T-cell (primary cell): ENCODE measurements at regions of chr2 and their contacts with region 1.

Region 1: GRCh38 chr2:11829947-11830707 is 83.7 kb downstream of the LPIN1 start:
- DNase-seq: peak in 33 of 35 experiments; percentile 4 to 71 (median 25)
- ATAC-seq: peak; percentile 74 to 88 (median 84)
- H3K4me3 ChIP-seq: peak overlapping the region; percentile 7 to 27
- H3K4me3 Mint-ChIP-seq: peak overlapping the region; percentile 74 to 80 (median 76)
- H3K27ac ChIP-seq: no peak overlapping the region
- H3K27ac Mint-ChIP-seq: peak overlapping the region; percentile 84 to 85
- H3K4me1 ChIP-seq: peaks cover 14 to 29% of the 10 kb centered on the region in 2 experiments
- H3K4me1 Mint-ChIP-seq: peaks cover 39 to 57% (median 47%) of the 10 kb centered on the region in 3 donors
- H3K27me3 ChIP-seq: peaks cover 0 to 6% of the 10 kb centered on the region in 2 experiments
- H3K27me3 Mint-ChIP-seq: no peaks in the 10 kb centered on the region

Region 2: GRCh38 chr2:11732587-11732986 is 97.5 kb before region 1 on chr2:
- CTCF ChIA-PET with region 1: interaction called in 1 of 2 experiments, 11 read pairs
- POLR2A ChIA-PET with region 1: no interaction called
- DNase-seq: no peak
- ATAC-seq: no peak
- H3K4me3 ChIP-seq: no peak overlapping the region
- H3K4me3 Mint-ChIP-seq: no peak overlapping the region
- H3K27ac ChIP-seq: no peak overlapping the region
- H3K27ac Mint-ChIP-seq: no peak overlapping the region
- H3K4me1 ChIP-seq: no peaks in the 10 kb centered on the region
- H3K4me1 Mint-ChIP-seq: peaks cover 0 to 6% (median 4%) of the 10 kb centered on the region in 3 donors
- H3K27me3 ChIP-seq: peaks cover 0 to 8% of the 10 kb centered on the region in 2 experiments
- H3K27me3 Mint-ChIP-seq: peaks cover 11 to 14% of the 10 kb centered on the region in 2 donors

Region 3: DNA sequence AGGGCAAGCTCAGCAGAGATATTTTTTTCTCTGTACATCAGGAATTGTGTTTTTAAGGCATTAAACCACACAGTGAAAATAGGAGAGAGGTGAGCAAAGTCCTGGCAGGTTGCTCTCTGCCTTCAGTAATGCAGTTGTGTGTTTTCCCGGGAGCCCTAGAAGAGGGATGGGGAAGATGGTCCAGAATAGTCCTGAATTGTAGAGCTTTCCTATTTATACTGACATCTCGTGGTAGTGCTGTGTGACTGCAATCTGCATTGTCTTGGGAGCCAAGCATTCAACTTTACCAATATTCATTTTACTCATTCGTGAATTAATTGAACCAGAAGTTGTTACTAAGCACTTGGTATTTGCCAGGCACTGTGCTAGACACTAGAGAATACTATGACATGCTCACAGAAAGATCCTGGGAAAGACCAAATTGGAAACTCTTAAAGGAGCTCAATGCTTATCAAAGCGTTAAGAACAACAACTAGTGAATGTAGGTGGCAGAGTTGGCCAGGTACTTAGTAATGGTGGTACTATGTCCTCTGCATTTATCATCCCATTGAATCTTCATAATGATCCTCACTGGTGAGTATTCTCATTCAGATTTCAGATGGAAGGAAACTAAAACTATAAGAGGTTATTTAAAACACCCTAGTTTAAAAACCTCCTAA is 1101.2 kb after region 1 on chr2:
- CTCF ChIA-PET with region 1: interaction called, 9 to 12 read pairs
- POLR2A ChIA-PET with region 1: no interaction called
- DNase-seq: peak in 5 of 35 experiments; percentile 0 to 45 (median 3)
- ATAC-seq: peak; percentile 43 to 67 (median 56)
- H3K4me3 ChIP-seq: no peak overlapping the region
- H3K4me3 Mint-ChIP-seq: no peak overlapping the region
- H3K27ac ChIP-seq: no peak overlapping the region
- H3K27ac Mint-ChIP-seq: no peak overlapping the region
- H3K4me1 ChIP-seq: peaks cover 3 to 5% of the 10 kb centered on the region in 2 experiments
- H3K4me1 Mint-ChIP-seq: peaks cover 7 to 15% (median 13%) of the 10 kb centered on the region in 3 donors
- H3K27me3 ChIP-seq: no peaks in the 10 kb centered on the region
- H3K27me3 Mint-ChIP-seq: peaks cover 0 to 8% of the 10 kb centered on the region in 2 donors